Psoas muscle (tissue), 8 donors: ENCODE measurements at regions of chr7 and their contacts with region 1.

Region 1: GRCh38 chr7:20598459-20599309 is 16.8 kb upstream of the ABCB5 start:
- DNase-seq: no peak
- ATAC-seq: peak; percentile 55 to 79 (median 69)
- H3K4me3 ChIP-seq: no peak overlapping the region
- H3K27ac ChIP-seq: no peak overlapping the region
- H3K4me1 ChIP-seq: no peaks in the 10 kb centered on the region
- H3K27me3 ChIP-seq: no peaks in the 10 kb centered on the region
- CTCF ChIP-seq: peak; percentile 80

Region 2: GRCh38 chr7:19708397-19709248 is 890.1 kb before region 1 on chr7 and contains the start of gene POLR1F:
- intact Hi-C with region 1: loop called (anchors 2 to 5 kb)
- DNase-seq: peak; percentile 95 to 96
- ATAC-seq: peak; percentile 99 to 100 (median 100)
- H3K4me3 ChIP-seq: peak within 1 kb of the TSS; percentile 89
- H3K27ac ChIP-seq: peak within 1 kb of the TSS; percentile 81
- H3K4me1 ChIP-seq: peaks cover 11% of the 10 kb centered on the region
- H3K27me3 ChIP-seq: no peaks in the 10 kb centered on the region
- CTCF ChIP-seq: peak; percentile 88
- total RNA-seq, gene POLR1F: 5.9 to 13.2 (median 11.8) TPM

Region 3: DNA sequence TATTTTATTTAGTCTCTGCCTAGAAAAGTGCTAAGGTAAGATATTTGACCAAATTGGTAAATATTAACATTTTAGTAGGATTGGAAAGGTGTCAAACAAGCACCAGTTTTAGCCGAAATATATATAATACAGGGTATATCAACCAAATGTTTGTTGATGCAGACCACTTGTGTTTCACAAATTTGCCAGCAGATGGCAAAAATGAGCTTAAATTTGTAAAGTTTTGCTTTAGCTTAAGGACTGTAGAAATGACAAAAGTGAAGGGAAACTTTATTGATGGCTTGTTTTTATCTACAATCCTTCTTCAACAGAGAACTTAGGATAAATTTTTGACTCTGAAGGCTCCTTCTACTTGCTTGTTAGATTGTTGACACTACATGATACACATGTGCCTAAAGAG is 885.0 kb before region 1 on chr7:
- intact Hi-C with region 1: loop called (anchors 2 to 5 kb)
- DNase-seq: no peak
- ATAC-seq: no peak
- H3K4me3 ChIP-seq: no peak overlapping the region
- H3K27ac ChIP-seq: no peak overlapping the region
- H3K4me1 ChIP-seq: no peaks in the 10 kb centered on the region
- H3K27me3 ChIP-seq: peaks cover 0 to 3% (median 0%) of the 10 kb centered on the region in 3 donors
- CTCF ChIP-seq: peak; percentile 38

Region 4: DNA sequence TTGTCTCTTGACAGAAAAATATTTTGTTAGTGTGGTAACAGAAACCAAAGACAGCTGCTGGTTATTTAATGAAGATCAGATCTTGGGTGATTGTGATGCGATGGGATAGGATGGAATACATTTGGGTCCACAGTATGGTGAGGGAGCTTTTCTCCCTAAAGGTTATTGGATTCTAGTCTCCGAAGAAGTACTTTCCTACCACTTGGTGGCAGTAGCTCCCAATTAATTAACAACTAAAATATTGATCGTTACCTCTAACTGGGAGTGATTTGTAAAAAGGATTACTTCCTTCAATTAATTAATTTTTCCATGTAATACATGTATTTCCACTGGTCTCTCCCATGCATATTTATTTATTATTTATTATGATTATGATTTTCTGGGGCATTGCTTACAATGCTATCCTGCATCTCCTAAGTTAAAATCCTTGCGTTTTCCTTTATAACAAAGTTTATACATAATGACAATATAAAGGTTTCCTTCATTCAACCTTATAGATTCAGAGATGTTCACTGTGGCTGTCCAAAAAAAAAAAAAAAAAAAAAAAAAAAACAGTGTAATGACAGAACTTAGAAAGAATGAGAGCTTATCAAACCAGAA is 850.8 kb before region 1 on chr7:
- intact Hi-C with region 1: loop called in 1 of 2 experiments (anchors 5 kb)
- DNase-seq: no peak
- ATAC-seq: no peak
- H3K4me3 ChIP-seq: no peak overlapping the region
- H3K27ac ChIP-seq: no peak overlapping the region
- H3K4me1 ChIP-seq: no peaks in the 10 kb centered on the region
- H3K27me3 ChIP-seq: no peaks in the 10 kb centered on the region
- CTCF ChIP-seq: peak; percentile 43

Region 5: DNA sequence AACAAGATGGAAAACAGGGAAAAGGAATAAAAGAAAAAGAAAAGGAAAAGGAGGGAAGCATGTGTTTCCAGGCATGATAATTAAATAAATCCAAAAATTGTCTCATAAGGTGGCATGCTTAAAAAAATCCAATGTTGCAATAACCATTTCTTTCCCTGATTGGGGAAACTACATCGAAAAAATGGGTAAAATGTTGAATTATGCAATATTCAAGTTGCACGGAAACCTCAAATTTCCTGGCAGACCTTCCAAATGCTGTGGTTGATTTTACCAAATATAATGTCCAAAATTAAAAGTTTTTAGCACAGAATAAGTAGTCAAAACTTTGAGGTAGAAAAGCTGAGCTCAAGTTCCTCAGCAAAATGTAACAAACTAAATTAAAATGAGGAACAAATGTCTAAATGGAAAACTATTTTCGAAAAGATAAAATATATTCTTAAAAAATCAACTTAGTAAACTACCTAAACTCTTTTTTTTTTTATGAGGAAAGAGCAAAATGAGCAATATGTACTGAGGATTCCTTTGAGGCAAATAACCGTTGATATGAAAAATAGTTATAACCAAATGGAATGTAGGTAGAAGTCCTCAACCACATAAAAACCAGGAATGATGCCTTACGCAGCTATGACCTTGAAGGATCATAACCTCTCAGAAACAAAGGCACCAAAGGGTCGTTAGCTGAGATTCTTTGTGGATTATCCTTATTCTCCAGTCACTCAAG is 434.1 kb before region 1 on chr7:
- intact Hi-C with region 1: loop called in 1 of 2 experiments (anchors 10 kb)
- DNase-seq: no peak
- ATAC-seq: no peak
- H3K4me3 ChIP-seq: no peak overlapping the region
- H3K27ac ChIP-seq: no peak overlapping the region
- H3K4me1 ChIP-seq: no peaks in the 10 kb centered on the region
- H3K27me3 ChIP-seq: no peaks in the 10 kb centered on the region
- CTCF ChIP-seq: no peak